AG04449 (cell line): ENCODE measurements at regions of chr13 and their contacts with region 1.

Region 1: GRCh38 chr13:99501184-99501847 is at the start of gene TM9SF2:
- DNase-seq: peak; percentile 77
- H3K4me3 ChIP-seq: peak within 1 kb of the TSS; percentile 92
- CTCF ChIP-seq: no peak

Region 2: DNA sequence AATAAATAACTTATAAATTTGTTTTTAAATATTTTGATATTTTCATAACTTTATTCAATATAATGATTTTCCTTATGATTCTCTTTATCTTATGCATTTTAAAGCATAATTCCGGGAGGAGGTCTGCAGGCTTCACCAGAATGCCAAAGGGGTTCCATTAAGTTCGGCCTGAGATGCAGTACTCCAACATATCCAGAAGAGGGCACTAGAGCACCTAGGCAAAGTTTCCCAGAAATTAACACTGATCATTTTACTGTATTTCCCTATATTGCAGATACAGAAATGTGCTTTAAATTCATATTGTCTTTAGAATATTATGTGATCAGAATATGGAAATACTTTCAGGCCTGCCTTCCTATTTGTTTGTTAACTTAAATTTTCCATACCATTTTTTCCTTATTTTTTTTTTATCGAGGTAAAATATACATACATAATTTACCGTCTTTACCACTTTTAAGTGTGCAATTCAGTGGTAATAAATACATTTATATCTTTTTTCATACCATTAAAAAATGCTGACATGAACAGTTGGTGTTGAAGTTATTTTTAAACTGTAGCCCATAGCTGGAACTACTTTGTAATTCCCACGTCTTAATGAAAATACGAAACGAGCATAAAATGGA is 58.9 kb before region 1 on chr13:
- CTCF ChIA-PET with region 1: interaction called, 116 read pairs
- POLR2A ChIA-PET with region 1: no interaction called
- DNase-seq: no peak
- H3K4me3 ChIP-seq: no peak overlapping the region
- CTCF ChIP-seq: peak; percentile 80

Region 3: DNA sequence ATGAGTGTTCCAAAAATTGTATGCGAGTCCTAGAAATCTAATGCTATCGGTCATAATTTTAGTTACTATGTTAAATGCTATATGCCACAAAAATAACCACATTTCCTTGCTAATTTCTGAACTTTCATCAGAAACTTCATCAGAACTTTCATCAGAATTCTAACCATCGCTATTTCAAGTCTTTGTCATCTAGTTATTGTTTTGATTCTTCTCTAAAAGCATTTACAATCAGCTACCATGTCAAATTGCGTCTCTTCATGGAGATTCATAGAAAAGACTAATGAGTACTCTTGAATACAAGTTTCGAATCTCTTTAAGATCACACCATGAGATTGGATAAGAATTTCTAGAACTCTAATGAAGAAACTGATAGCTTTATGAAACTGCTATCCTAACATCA is 52.8 kb before region 1 on chr13:
- CTCF ChIA-PET with region 1: interaction called, 116 read pairs
- POLR2A ChIA-PET with region 1: no interaction called
- DNase-seq: no peak
- H3K4me3 ChIP-seq: no peak overlapping the region
- CTCF ChIP-seq: no peak

Region 4: GRCh38 chr13:99516153-99516929 is 15.0 kb after region 1 on chr13:
- CTCF ChIA-PET with region 1: interaction called, 107 read pairs
- POLR2A ChIA-PET with region 1: no interaction called
- DNase-seq: no peak
- H3K4me3 ChIP-seq: no peak overlapping the region
- CTCF ChIP-seq: no peak

Region 5: GRCh38 chr13:99792079-99792921 is 291.0 kb after region 1 on chr13:
- CTCF ChIA-PET with region 1: no interaction called
- POLR2A ChIA-PET with region 1: no interaction called
- DNase-seq: no peak
- H3K4me3 ChIP-seq: no peak overlapping the region
- CTCF ChIP-seq: no peak

Region 6: DNA sequence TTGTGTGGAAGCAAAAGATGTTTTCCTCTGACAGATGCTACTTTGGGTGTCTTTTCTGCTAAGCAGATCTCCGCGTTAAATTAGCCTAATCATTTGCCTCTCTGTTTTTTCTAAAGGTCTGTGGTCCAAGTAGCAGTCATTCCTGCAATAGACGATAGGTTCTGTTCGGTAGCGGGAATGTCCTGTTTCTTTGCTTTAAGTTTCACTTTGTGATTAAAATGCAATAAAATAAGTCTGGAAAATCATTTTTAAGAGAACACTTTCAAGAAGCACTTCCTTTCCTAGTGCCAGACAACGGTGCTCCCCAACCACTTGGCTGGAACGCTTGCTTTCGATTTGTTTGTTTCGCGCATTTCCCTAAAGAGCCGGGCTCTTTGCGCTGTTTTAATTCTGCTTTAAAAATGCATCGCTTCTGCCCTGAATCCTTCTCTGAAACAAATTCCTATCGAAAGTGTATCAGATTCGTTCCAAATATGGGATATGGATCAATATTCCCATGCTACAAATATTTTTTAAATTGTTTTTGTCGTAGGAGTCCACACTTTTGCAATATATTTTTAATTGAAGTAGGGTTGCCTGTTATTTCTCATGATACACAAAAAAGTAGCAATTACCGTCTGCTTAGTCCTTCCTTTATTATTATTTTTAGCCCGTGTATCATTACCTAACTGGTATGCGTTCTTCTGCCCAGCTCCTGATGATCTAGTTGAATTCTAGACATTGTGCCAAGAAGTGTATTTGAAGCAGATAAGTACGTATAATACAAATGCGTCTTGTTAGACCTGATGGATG is 494.5 kb after region 1 on chr13:
- CTCF ChIA-PET with region 1: no interaction called
- POLR2A ChIA-PET with region 1: no interaction called
- DNase-seq: no peak
- H3K4me3 ChIP-seq: no peak overlapping the region
- CTCF ChIP-seq: no peak